Activated CD4-positive, alpha-beta T cell treated with anti-CD3 and anti-CD28 coated beads for 36 hours (primary cell): ENCODE measurements at regions of chr2 and their contacts with region 1.

Region 1: DNA sequence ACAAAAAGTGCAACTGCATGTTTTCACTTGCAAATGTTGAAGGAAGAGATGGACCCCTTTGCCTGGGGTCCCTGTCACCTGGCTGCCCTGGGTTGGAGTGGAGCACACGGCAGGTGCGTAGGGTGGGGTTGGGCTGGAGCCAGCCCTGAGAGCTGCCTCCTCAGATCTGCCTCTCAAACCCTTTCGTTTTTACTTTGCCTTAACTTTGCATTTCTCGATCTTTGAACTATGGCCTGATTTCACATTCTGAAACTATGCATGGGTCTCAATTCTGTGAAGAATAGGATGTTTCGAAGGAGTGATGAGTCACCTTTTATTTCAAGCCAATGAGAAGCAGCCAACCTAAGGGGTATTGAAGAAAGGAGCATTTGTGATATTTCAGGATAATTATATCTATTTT is 132.8 kb downstream of the ACOXL start:
- DNase-seq: peak; percentile 67
- ATAC-seq: peak; percentile 80
- H3K4me3 Mint-ChIP-seq: no peak overlapping the region
- H3K27ac Mint-ChIP-seq: no peak overlapping the region
- H3K4me1 Mint-ChIP-seq: peaks cover 46% of the 10 kb centered on the region
- H3K27me3 Mint-ChIP-seq: peaks cover 54% of the 10 kb centered on the region

Region 2: DNA sequence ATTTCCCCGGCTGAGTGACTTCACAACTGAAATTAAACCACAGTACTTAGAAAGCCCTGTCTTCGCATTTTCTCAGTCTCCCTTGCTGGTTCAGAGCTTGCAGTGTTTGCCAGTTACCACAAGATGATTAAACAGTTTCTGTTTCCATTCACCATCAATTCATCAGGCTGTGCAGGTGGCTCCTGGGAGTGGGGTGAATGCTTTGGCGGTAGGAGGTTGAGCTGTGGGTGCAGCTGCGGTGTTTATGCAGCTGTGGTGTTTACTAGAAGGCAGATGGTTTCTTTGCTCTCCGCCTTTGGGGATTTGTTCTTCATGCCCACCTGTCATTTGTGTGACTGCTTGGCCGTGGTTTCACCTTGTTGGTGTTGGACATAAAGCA is 116.7 kb before region 1 on chr2:
- CTCF ChIA-PET with region 1: no interaction called
- POLR2A ChIA-PET with region 1: no interaction called
- intact Hi-C with region 1: loop called (anchors 1 to 5 kb)
- DNase-seq: peak; percentile 86
- ATAC-seq: peak; percentile 99
- H3K4me3 Mint-ChIP-seq: no peak overlapping the region
- H3K27ac Mint-ChIP-seq: no peak overlapping the region
- H3K4me1 Mint-ChIP-seq: peaks cover 18% of the 10 kb centered on the region
- H3K27me3 Mint-ChIP-seq: peaks cover 67% of the 10 kb centered on the region

Region 3: GRCh38 chr2:110788976-110789375 is 76.2 kb before region 1 on chr2:
- CTCF ChIA-PET with region 1: no interaction called
- POLR2A ChIA-PET with region 1: no interaction called
- intact Hi-C with region 1: no loop called
- DNase-seq: no peak
- ATAC-seq: no peak
- H3K4me3 Mint-ChIP-seq: no peak overlapping the region
- H3K27ac Mint-ChIP-seq: no peak overlapping the region
- H3K4me1 Mint-ChIP-seq: no peaks in the 10 kb centered on the region
- H3K27me3 Mint-ChIP-seq: peaks cover 45% of the 10 kb centered on the region

Region 4: DNA sequence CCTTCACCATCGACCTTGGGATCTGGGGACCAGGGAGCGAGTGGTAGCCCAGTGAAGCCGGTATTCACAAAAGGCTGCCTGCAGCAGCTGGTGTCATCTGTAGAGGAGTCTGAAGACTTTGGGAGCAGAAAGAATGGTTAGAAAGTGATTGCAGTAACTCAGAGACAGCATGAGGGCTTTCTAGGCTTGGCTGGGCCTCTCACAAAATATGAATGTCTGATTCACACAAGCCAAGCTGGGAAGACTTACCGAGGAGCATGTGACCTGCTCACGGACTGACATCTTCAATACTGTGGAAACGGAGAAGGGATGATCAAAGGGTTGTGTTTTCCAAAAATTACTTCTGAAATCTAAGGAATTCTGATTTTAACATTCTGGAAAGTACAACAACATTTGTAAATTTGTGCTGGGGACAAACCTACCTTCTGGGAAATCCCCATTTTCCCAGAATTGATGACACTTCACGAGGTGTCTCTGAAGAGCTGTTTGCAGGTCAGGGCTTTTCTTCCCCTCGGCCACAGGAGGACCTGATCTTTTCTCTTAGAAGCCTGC is 21.2 kb before region 1 on chr2:
- CTCF ChIA-PET with region 1: interaction called, 5 read pairs
- POLR2A ChIA-PET with region 1: no interaction called
- intact Hi-C with region 1: loop called (anchors 1 kb)
- DNase-seq: peak; percentile 35
- ATAC-seq: peak; percentile 27
- H3K4me3 Mint-ChIP-seq: no peak overlapping the region
- H3K27ac Mint-ChIP-seq: no peak overlapping the region
- H3K4me1 Mint-ChIP-seq: peaks cover 58% of the 10 kb centered on the region
- H3K27me3 Mint-ChIP-seq: peaks cover 33% of the 10 kb centered on the region

Region 5: DNA sequence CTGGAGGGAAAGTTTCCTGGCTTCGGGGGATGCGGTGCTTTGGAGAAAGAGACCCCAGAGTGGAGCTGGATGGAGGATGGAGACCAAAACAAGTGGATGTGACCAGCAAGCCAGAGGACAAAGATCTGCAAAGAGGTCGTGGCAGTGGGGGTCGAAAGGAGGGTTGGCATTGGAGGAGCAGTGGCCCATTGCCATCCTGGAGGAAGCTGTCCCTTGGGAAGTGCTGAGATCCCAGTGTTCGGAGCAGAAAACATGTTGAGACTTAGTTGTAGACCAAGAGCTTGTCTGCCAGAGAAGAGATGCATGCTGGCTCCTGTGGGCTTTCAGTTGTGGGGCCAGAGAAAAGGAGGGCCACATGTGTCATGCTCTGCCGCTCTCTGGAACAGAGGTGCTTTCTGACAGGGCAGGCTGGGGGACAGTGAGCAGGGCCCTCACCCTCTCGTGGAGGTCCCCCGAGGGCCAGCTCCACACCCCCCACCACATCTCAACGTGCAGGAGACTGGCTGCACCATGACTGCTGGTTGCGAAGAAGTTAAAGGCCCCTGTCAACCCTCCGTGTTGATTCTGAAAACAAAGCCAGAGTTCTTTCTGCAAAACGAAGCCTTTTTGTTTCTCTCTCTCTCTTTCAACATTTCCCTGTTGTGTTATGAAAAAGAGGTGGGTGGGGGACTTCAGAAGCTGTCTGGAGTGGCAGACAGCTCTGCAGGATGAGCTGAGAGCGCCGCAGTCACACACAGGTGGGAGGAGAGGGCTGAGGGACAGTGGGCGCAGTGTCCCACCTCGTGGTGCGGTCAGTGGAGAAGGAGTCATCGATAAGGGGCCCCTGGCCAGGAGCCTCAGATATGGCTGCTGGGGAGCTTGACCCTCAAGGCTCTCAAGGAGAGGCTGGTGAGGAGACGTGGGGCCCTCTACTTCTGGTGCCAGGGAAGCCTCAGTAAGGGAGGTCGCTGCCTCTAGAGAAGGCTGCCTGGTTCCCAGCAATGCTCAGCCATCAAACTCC is 177.9 kb after region 1 on chr2:
- CTCF ChIA-PET with region 1: no interaction called
- POLR2A ChIA-PET with region 1: no interaction called
- intact Hi-C with region 1: loop called in 1 of 2 experiments (anchors 5 kb)
- DNase-seq: peak; percentile 57
- ATAC-seq: peak; percentile 91
- H3K4me3 Mint-ChIP-seq: peak overlapping the region; percentile 5
- H3K27ac Mint-ChIP-seq: no peak overlapping the region
- H3K4me1 Mint-ChIP-seq: peaks cover 26% of the 10 kb centered on the region
- H3K27me3 Mint-ChIP-seq: peaks cover 53% of the 10 kb centered on the region

Region 6: GRCh38 chr2:111168528-111169239 is 303.5 kb after region 1 on chr2:
- CTCF ChIA-PET with region 1: no interaction called
- POLR2A ChIA-PET with region 1: no interaction called
- intact Hi-C with region 1: loop called in 1 of 2 experiments (anchors 5 kb)
- DNase-seq: peak; percentile 88
- ATAC-seq: peak; percentile 98
- H3K4me3 Mint-ChIP-seq: no peak overlapping the region
- H3K27ac Mint-ChIP-seq: no peak overlapping the region
- H3K4me1 Mint-ChIP-seq: peaks cover 24% of the 10 kb centered on the region
- H3K27me3 Mint-ChIP-seq: peaks cover 21% of the 10 kb centered on the region

Region 7: DNA sequence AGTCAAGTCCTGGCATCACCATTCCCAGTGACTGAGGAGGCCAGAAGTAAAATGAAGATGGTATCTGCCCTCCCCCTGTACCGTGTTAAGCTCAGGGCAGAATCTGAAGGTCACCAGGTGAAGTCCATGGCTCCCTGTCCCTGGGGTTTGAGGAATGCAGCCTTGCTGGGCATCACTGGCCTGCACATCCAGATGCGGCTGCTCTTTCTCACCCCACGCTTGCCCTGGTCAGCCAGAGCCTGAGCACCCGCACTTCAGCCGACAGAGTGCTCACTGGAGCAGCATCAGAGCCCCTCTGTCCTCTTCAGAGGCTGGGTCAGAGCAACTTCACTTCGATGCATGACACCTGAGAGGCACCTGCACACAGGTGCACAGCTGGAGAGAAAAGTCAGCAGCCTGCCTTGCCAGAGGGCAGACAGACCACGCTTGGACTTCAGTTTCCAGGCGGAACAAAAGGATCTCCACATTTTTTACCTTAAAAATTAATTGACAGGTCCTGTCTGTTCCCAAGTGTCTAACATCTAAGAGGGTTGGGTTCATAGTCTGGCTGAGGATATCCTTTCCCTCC is 751.5 kb after region 1 on chr2:
- CTCF ChIA-PET with region 1: no interaction called
- POLR2A ChIA-PET with region 1: no interaction called
- intact Hi-C with region 1: no loop called
- DNase-seq: no peak
- ATAC-seq: no peak
- H3K4me3 Mint-ChIP-seq: no peak overlapping the region
- H3K27ac Mint-ChIP-seq: no peak overlapping the region
- H3K4me1 Mint-ChIP-seq: no peaks in the 10 kb centered on the region
- H3K27me3 Mint-ChIP-seq: peaks cover 9% of the 10 kb centered on the region

Region 8: GRCh38 chr2:112150447-112150846 is 1285.3 kb after region 1 on chr2:
- CTCF ChIA-PET with region 1: no interaction called
- POLR2A ChIA-PET with region 1: no interaction called
- intact Hi-C with region 1: no loop called
- DNase-seq: no peak
- ATAC-seq: no peak
- H3K4me3 Mint-ChIP-seq: no peak overlapping the region
- H3K27ac Mint-ChIP-seq: no peak overlapping the region
- H3K4me1 Mint-ChIP-seq: peaks cover 24% of the 10 kb centered on the region
- H3K27me3 Mint-ChIP-seq: no peaks in the 10 kb centered on the region